Calu3 (cell line): ENCODE measurements at regions of chr3 and their contacts with region 1.

Region 1: GRCh38 chr3:189270248-189270832 is 98.6 kb downstream of the TPRG1 start:
- DNase-seq: peak; percentile 84
- H3K4me3 Mint-ChIP-seq: no peak overlapping the region
- H3K27ac Mint-ChIP-seq: no peak overlapping the region
- H3K4me1 Mint-ChIP-seq: peaks cover 45% of the 10 kb centered on the region
- H3K27me3 Mint-ChIP-seq: no peaks in the 10 kb centered on the region
- CTCF ChIP-seq: peak; percentile 86

Region 2: DNA sequence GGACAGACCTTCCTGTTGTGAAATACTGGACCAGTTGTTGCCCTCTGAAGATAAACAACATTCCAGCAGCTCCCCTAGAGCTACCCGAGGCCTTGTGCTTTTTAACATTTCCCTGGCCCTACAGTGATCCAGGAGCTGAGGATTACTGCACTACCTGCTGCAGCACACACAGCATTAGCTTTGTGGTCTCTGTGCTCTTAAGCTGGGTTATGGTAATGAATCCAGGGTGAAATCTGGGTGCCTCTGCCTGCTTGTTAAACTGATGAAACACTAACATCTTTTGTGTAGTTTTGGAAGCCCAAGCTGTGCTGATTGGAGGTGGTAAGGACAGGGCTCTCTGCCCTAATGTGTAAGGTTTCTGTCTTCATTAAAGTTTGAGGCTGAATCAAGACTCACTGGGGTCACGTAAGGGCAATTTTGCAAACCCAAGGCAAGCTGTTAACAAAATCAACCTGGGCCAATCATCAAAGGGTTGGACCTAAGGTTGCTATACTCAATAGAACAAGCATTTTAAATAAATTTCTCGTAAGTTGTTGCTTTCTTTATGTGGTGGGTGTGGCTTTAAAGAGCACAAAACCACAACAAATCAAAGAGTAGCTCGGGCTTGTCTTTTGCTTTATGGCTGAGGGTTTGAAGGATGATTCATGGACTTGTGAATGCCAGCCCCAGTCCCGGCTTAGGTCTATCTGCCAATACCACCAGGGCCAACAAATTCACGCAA is 85.3 kb after region 1 on chr3:
- CTCF ChIA-PET with region 1: interaction called, 11 read pairs
- intact Hi-C with region 1: loop called (anchors 1 kb)
- DNase-seq: peak; percentile 30
- H3K4me3 Mint-ChIP-seq: no peak overlapping the region
- H3K27ac Mint-ChIP-seq: peak overlapping the region; percentile 91
- H3K4me1 Mint-ChIP-seq: peaks cover 32% of the 10 kb centered on the region
- H3K27me3 Mint-ChIP-seq: no peaks in the 10 kb centered on the region
- CTCF ChIP-seq: no peak

Region 3: GRCh38 chr3:189467451-189467850 is 197.1 kb after region 1 on chr3:
- CTCF ChIA-PET with region 1: no interaction called
- intact Hi-C with region 1: loop called (anchors 10 kb)
- DNase-seq: no peak
- H3K4me3 Mint-ChIP-seq: no peak overlapping the region
- H3K27ac Mint-ChIP-seq: no peak overlapping the region
- H3K4me1 Mint-ChIP-seq: no peaks in the 10 kb centered on the region
- H3K27me3 Mint-ChIP-seq: no peaks in the 10 kb centered on the region
- CTCF ChIP-seq: no peak

Region 4: GRCh38 chr3:189641776-189642175 is 371.4 kb after region 1 on chr3:
- CTCF ChIA-PET with region 1: interaction called, 5 read pairs
- intact Hi-C with region 1: loop called (anchors 5 kb)
- DNase-seq: no peak
- H3K4me3 Mint-ChIP-seq: no peak overlapping the region
- H3K27ac Mint-ChIP-seq: no peak overlapping the region
- H3K4me1 Mint-ChIP-seq: no peaks in the 10 kb centered on the region
- H3K27me3 Mint-ChIP-seq: no peaks in the 10 kb centered on the region
- CTCF ChIP-seq: no peak

Region 5: DNA sequence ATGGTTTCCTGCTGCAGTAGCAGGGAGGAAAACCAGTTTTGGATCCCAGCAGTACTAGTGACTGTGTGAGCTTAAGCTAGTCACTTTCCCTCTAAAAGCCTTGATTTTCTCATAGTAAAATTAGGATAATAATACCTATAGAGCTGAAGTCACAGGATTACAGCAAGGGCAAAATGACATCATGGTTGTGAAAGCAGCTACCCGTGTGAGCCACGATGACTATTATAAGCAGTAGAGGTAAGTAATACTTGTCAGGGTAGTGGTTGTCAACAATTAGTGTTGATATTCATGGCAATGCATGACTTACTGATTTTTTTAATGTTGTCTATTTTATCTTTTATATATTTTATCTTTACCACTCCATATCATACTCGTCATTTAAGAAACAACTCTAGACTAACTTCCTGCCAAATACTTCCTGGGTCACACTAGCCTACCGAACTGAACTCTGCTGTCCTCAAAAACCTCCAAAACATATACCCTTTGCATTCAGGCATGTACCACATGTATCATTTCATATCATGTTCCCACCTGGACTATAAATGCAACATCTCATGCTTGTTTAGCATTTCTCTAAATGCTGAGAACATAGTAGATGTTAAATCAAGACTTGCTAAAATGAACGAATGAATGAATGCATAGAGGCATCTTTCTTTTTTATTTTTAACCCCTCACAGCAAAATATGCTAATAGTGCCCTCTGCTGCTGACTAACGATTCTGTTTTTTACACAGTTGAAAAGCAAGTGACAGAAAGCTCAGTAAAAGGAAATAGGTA is 677.8 kb after region 1 on chr3:
- CTCF ChIA-PET with region 1: interaction called, 77 read pairs
- intact Hi-C with region 1: loop called (anchors 1 kb)
- DNase-seq: peak; percentile 63
- H3K4me3 Mint-ChIP-seq: no peak overlapping the region
- H3K27ac Mint-ChIP-seq: peak overlapping the region; percentile 23
- H3K4me1 Mint-ChIP-seq: peaks cover 53% of the 10 kb centered on the region
- H3K27me3 Mint-ChIP-seq: no peaks in the 10 kb centered on the region
- CTCF ChIP-seq: peak; percentile 71